Sciatic nerve (tissue), 2 donors: ENCODE measurements at regions of chr3 and their contacts with region 1.

Region 1: GRCh38 chr3:130889416-130889946 is 4.4 kb upstream of the ATP2C1 start:
- DNase-seq: no peak
- ATAC-seq: no peak

Region 2: GRCh38 chr3:130759699-130760338 is 129.7 kb before region 1 on chr3:
- intact Hi-C with region 1: loop called (anchors 10 kb)
- DNase-seq: no peak
- ATAC-seq: peak; percentile 63

Region 3: GRCh38 chr3:130950641-130951040 is 61.2 kb after region 1 on chr3:
- intact Hi-C with region 1: no loop called
- DNase-seq: no peak
- ATAC-seq: no peak